GM12878 (cell line): ENCODE measurements at regions of chr7 and their contacts with region 1.

Region 1: DNA sequence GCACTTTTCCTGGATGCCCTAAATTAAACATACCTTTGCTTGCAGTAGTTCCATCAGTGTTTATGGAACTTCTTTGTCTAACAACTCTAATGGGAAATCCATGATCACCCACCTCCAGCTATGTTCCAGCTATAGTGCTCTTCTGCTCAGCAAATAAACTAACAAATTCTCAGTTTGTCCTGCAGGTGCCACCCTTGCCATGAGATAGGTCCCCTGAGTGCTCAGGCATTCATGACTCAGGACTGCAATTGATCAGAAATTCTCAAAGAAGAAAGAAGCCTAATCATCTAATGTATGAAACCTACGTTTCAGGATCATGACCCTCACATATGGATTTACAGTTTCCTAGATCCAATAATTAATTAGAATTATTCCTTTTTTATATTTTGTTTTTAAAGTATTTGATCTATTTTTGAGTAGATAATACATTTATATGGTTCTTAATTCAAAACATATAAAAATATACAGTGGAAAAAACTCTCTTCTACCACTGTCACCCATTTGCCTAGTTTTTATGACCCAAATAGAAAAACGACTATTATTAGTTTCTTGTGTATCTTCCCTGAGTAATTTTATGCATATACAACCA is 48.7 kb upstream of the DYNC1I1 start:
- DNase-seq: peak; percentile 11
- ATAC-seq: peak; percentile 86
- H3K4me3 ChIP-seq: no peak overlapping the region
- H3K27ac ChIP-seq: no peak overlapping the region
- H3K4me1 ChIP-seq: no peaks in the 10 kb centered on the region
- H3K27me3 ChIP-seq: peaks cover 0 to 2% of the 10 kb centered on the region in 2 experiments; a peak in 1 of 4 replicates
- CTCF ChIP-seq: peak in 2 of 3 experiments; percentile 36 to 67; a peak in 3 of 6 replicates
- EP300 ChIP-seq: no peak
- POLR2A ChIP-seq: no peak
- RAD21 ChIP-seq: peak; percentile 56

Region 2: GRCh38 chr7:95596198-95597063 is 127.3 kb before region 1 on chr7 and contains the start of gene PDK4:
- CTCF ChIA-PET with region 1: no interaction called
- POLR2A ChIA-PET with region 1: no interaction called
- RAD21 ChIA-PET with region 1: no interaction called
- SMC1A ChIA-PET with region 1: no interaction called
- in situ Hi-C with region 1: no loop called
- intact Hi-C with region 1: no loop called
- DNase-seq: no peak
- ATAC-seq: peak; percentile 58
- H3K4me3 ChIP-seq: no peak within 1 kb of the TSS
- H3K27ac ChIP-seq: no peak within 1 kb of the TSS
- H3K4me1 ChIP-seq: no peaks in the 10 kb centered on the region
- H3K27me3 ChIP-seq: peaks cover 2 to 5% of the 10 kb centered on the region in 2 experiments; a peak in 3 of 4 replicates
- CTCF ChIP-seq: no peak
- EP300 ChIP-seq: no peak
- POLR2A ChIP-seq: no peak
- RAD21 ChIP-seq: no peak
- polyA plus RNA-seq, gene PDK4: not detected

Region 3: GRCh38 chr7:95772298-95772770 is 48.6 kb after region 1 on chr7 and contains the start of gene DYNC1I1:
- CTCF ChIA-PET with region 1: interaction called, 6 read pairs
- POLR2A ChIA-PET with region 1: no interaction called
- RAD21 ChIA-PET with region 1: interaction called, 7 read pairs
- SMC1A ChIA-PET with region 1: interaction called, 10 read pairs
- in situ Hi-C with region 1: no loop called
- intact Hi-C with region 1: no loop called
- DNase-seq: no peak
- ATAC-seq: peak; percentile 94
- H3K4me3 ChIP-seq: peak within 1 kb of the TSS; percentile 47; the same call in 1 of the 2 replicates
- H3K27ac ChIP-seq: no peak within 1 kb of the TSS
- H3K4me1 ChIP-seq: no peaks in the 10 kb centered on the region
- H3K27me3 ChIP-seq: peaks cover 2 to 7% of the 10 kb centered on the region in 2 experiments; a peak in 1 of 4 replicates
- CTCF ChIP-seq: no peak
- EP300 ChIP-seq: no peak
- POLR2A ChIP-seq: no peak
- RAD21 ChIP-seq: no peak
- polyA plus RNA-seq, gene DYNC1I1: 0.05 TPM in 1 of 2 experiments, not detected in the other

Region 4: GRCh38 chr7:95794917-95795515 is 71.3 kb after region 1 on chr7:
- CTCF ChIA-PET with region 1: interaction called, 24 read pairs
- POLR2A ChIA-PET with region 1: no interaction called
- RAD21 ChIA-PET with region 1: interaction called, 5 read pairs
- SMC1A ChIA-PET with region 1: interaction called, 45 read pairs
- in situ Hi-C with region 1: no loop called
- intact Hi-C with region 1: loop called (anchors 5 kb)
- DNase-seq: no peak
- ATAC-seq: peak; percentile 70
- H3K4me3 ChIP-seq: no peak overlapping the region
- H3K27ac ChIP-seq: no peak overlapping the region
- H3K4me1 ChIP-seq: no peaks in the 10 kb centered on the region
- H3K27me3 ChIP-seq: peaks cover 0 to 2% of the 10 kb centered on the region in 2 experiments; a peak in 1 of 4 replicates
- CTCF ChIP-seq: peak; percentile 31 to 63 (median 56)
- EP300 ChIP-seq: no peak
- POLR2A ChIP-seq: no peak
- RAD21 ChIP-seq: 0 out of 2 replicates have a peak, but pooled peaks have one; percentile 29

Region 5: DNA sequence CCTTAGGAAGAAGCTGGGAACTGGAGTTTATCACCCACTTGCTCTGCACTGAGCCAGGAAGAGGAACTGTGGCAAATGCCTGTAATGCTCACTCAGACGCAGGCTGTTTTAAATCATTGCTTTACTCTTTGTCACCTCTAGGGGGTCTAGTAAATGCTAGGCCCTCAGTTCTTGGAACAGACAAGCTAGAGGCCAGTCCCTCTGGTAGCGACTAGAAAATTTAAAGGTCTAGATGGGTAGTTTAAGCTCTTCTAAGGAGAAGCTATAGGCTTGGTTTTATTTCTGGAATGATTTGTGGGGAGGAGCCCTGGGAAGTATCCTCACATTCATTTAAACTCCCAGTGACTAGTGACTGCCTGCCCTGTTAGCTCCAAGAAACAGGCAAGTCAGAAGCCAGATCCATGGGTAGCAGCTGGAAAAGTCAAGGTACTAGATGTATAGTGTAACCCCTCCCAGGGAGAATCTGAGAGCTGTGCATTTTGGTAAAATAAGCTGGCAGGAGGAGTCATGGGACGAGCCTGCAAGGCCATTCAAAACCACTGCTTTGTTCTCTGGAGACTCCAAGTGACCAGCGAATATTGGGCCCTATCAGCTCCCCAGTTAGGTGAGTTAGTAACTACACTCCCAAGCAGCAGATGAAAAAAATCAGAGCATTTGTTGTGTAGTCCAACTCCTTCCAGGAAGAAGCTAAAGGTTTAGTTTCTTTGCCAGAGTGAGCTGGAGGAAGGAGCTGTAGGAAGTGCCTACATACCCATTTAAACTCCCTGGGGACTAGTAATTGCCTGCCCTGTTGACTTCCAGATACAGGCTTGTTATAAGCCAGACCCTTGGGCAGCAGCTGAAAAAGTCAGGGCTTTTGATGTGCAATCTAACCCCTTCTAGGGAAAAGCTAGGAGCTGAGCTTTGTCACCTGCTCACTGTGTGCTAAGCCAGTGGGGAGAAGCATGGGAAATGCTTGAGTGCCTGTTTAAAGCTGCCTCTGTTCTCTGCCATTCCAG is 117.6 kb after region 1 on chr7:
- CTCF ChIA-PET with region 1: interaction called, 39 read pairs
- POLR2A ChIA-PET with region 1: no interaction called
- RAD21 ChIA-PET with region 1: interaction called, 11 read pairs
- SMC1A ChIA-PET with region 1: interaction called, 22 read pairs
- in situ Hi-C with region 1: no loop called
- intact Hi-C with region 1: no loop called
- DNase-seq: no peak
- ATAC-seq: peak; percentile 98
- H3K4me3 ChIP-seq: no peak overlapping the region
- H3K27ac ChIP-seq: no peak overlapping the region
- H3K4me1 ChIP-seq: no peaks in the 10 kb centered on the region
- H3K27me3 ChIP-seq: no peaks in the 10 kb centered on the region
- CTCF ChIP-seq: peak; percentile 30 to 56 (median 43)
- EP300 ChIP-seq: no peak
- POLR2A ChIP-seq: no peak
- RAD21 ChIP-seq: no peak

Region 6: DNA sequence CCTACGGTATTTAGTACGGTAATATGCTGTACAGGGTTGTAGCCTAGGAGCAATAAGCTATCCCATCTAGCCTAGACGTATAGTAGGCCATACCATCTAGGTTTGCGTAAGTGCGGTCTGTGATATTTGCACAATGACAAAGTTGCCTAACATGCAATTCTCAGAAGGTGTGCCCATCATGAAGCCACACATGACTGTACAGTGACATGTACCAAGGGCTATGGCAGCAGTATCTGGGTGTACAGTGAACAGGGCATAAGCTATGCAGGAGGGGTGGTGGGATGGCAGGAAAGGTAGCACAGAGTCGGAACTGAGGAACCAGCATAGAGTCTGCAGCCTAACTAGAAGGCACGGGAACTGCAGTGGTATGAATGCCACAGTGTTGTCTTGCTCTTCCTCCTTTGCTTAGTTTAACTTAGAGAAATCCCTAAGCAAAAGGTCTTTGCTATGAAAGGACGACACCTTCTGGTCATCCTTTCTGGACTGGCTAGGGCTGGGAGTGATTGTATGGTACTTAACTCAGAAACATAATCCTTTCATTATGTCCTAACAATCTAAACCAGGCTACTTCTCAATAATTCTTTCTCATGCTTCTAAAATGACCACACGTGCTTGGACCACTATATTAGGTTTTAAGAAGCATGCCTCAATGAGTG is 142.2 kb after region 1 on chr7:
- CTCF ChIA-PET with region 1: interaction called, 421 read pairs
- POLR2A ChIA-PET with region 1: interaction called, 3 read pairs
- RAD21 ChIA-PET with region 1: interaction called, 183 read pairs
- SMC1A ChIA-PET with region 1: interaction called, 176 read pairs
- in situ Hi-C with region 1: loop called (anchors 5 kb)
- intact Hi-C with region 1: loop called (anchors 1 kb)
- DNase-seq: no peak
- ATAC-seq: peak; percentile 46
- H3K4me3 ChIP-seq: no peak overlapping the region
- H3K27ac ChIP-seq: no peak overlapping the region
- H3K4me1 ChIP-seq: no peaks in the 10 kb centered on the region
- H3K27me3 ChIP-seq: no peaks in the 10 kb centered on the region
- CTCF ChIP-seq: peak in 1 of 3 experiments; percentile 34; a peak in 1 of 6 replicates
- EP300 ChIP-seq: no peak
- POLR2A ChIP-seq: no peak
- RAD21 ChIP-seq: no peak

Region 7: GRCh38 chr7:95871078-95871782 is 147.5 kb after region 1 on chr7:
- CTCF ChIA-PET with region 1: interaction called, 421 read pairs
- POLR2A ChIA-PET with region 1: interaction called, 3 read pairs
- RAD21 ChIA-PET with region 1: interaction called, 183 read pairs
- SMC1A ChIA-PET with region 1: interaction called, 176 read pairs
- in situ Hi-C with region 1: loop called (anchors 5 kb)
- intact Hi-C with region 1: loop called (anchors 1 kb)
- DNase-seq: no peak
- ATAC-seq: peak; percentile 69
- H3K4me3 ChIP-seq: no peak overlapping the region
- H3K27ac ChIP-seq: no peak overlapping the region
- H3K4me1 ChIP-seq: no peaks in the 10 kb centered on the region
- H3K27me3 ChIP-seq: no peaks in the 10 kb centered on the region
- CTCF ChIP-seq: peak; percentile 55 to 77 (median 63)
- EP300 ChIP-seq: no peak
- POLR2A ChIP-seq: no peak
- RAD21 ChIP-seq: peak; percentile 70

Region 8: DNA sequence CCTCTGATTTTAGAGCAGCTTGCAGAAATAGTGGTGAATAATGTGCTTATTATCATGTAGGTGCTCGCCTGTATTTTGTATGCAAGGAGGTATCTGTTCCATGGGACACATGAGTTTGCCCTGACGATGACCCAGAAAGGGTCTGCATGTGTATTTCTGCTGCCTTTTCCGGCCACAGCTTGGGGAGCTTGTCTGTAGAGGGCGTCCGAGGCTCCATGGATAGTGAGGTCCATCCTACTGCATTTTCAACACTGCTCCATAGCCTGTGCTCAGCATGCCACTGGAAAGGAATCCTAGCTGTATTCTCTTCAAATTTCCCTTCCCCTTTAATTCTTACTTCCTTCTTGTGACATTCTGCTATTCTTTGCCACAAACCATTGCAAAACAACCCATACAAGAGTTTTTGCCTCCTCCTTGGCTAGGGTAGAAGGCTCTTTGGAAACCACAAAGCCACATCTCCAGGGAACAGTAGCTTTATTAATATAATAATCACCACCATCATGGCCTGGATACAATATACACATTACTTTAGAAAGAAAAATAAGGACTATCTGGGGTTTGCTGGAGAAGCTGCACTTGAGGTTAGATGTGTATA is 176.3 kb after region 1 on chr7:
- CTCF ChIA-PET with region 1: no interaction called
- POLR2A ChIA-PET with region 1: no interaction called
- RAD21 ChIA-PET with region 1: no interaction called
- SMC1A ChIA-PET with region 1: no interaction called
- in situ Hi-C with region 1: no loop called
- intact Hi-C with region 1: no loop called
- DNase-seq: no peak
- ATAC-seq: no peak
- H3K4me3 ChIP-seq: no peak overlapping the region
- H3K27ac ChIP-seq: no peak overlapping the region
- H3K4me1 ChIP-seq: no peaks in the 10 kb centered on the region
- H3K27me3 ChIP-seq: no peaks in the 10 kb centered on the region
- CTCF ChIP-seq: no peak; a peak in 1 of 6 replicates
- EP300 ChIP-seq: no peak
- POLR2A ChIP-seq: no peak
- RAD21 ChIP-seq: no peak